ENCODE measurements at regions of chr3 and their contacts with region 1.

Region 1: DNA sequence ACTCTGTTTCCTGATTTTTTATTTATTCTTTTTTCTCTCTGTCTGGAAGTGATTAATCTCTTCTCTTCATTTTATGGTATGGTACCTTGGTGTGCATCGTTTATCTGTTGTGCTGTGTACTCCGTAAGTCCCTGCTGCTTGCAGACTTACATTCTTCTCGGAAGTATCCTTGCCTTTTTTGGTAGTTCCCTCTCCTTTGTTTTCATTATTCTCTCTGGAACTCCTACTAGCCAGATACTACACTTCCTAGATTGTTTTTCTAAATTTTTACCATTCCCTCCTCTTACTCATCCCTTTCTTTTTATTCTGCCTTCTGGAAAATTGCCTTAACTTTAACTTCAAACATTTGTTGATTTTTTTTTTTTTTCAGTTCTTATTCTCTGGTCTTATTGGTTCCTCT is 27.2 kb downstream of the PIK3CA start:
- DNase-seq: no peak
- ATAC-seq: no peak
- H3K4me3 ChIP-seq: no peak overlapping the region
- H3K27ac ChIP-seq: no peak overlapping the region
- H3K4me1 ChIP-seq: peaks cover 8% of the 10 kb centered on the region; the same call in 1 of the 2 replicates
- H3K27me3 ChIP-seq: no peaks in the 10 kb centered on the region
- CTCF ChIP-seq: no peak

Region 2: DNA sequence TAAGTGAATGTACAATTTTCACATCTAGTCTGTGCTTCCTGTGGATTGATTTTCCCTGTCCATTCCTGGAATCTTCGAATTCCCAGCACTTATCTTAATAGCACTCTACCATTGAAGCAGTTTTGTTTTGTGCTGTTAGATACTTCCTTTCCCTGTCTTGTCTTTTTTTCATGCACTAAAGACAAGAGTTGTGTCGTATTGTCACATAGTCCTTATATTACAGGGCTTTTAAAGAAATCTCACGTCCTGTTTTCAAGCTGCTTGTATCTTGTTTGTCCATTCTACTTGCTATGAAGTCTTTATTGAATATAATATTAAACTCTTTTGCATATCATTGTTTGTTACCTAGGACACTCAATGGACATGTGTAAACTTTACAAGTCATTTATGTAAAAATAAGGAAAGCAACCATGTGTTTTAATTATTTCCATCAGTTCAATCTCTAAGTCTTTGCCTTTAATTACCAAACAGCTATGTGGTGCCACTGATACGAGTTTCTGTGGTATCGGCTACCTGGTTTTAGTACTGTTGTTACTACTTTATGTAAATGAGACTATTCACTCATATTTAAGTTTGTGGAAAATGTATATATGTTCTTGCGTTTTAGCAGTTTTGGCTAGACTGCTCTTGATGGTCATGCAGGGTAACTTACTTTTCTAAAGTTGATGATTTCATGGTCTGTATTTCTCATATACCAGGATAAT is 16.9 kb before region 1 on chr3:
- CTCF ChIA-PET with region 1: no interaction called
- POLR2A ChIA-PET with region 1: interaction called, 10 read pairs
- in situ Hi-C with region 1: no loop called
- intact Hi-C with region 1: no loop called
- DNase-seq: no peak
- ATAC-seq: no peak
- H3K4me3 ChIP-seq: no peak overlapping the region
- H3K27ac ChIP-seq: no peak overlapping the region
- H3K4me1 ChIP-seq: 0 out of 2 replicates have a peak, but pooled peaks cover 4% of the 10 kb centered on the region
- H3K27me3 ChIP-seq: no peaks in the 10 kb centered on the region
- CTCF ChIP-seq: no peak

Measured in Panc1 (cell line).